Transverse colon (tissue), 4 donors: ENCODE measurements at regions of chr4 and their contacts with region 1.

Region 1: GRCh38 chr4:173516621-173517524 is 13.2 kb downstream of the HAND2 start:
- DNase-seq: no peak
- H3K4me3 ChIP-seq: peak overlapping the region in 2 of 4 donors; percentile 25 to 40
- H3K27ac ChIP-seq: peak overlapping the region; percentile 82 to 95 (median 89)
- H3K4me1 ChIP-seq: peaks cover 4 to 48% (median 27%) of the 10 kb centered on the region in 4 donors
- H3K27me3 ChIP-seq: peaks cover 100% of the 10 kb centered on the region
- CTCF ChIP-seq: no peak
- EP300 ChIP-seq: no peak
- POLR2A ChIP-seq: no peak

Region 2: DNA sequence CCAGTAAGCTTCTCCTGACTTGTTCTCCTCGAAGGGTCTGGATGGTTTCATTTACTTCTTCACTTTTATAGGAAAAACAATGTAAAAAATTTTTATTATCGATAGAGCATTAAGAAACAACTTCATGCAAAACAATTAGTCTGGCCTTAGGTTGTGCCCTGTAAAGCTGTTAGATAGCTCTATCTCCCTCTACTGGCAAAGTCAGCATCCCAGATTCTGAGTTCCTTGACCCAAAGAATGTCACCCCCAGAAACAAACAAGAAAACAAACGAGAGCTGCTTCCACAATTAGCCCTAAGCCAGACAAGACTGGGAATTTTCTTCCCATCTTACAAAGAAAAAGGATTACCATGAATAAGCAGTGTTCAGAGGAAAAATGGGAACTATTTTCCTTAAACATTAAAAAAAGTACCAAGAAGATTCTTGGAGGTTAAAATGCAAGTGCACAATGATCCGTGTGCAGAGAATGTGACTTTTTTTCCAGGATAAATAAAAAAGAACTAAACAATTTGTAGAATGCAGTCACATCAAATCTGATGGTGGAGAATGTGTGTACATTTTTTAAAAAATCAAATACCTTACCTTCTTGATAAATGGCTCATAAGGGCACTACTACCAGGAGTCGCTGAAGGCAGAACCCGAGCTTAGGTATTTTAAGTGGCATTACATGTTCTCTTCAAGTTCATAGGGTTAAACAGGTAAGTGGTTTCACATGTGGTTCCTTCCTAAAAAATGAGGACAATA is 473.4 kb after region 1 on chr4:
- in situ Hi-C with region 1: no loop called
- intact Hi-C with region 1: loop called (anchors 5 kb)
- DNase-seq: no peak
- H3K4me3 ChIP-seq: no peak overlapping the region
- H3K27ac ChIP-seq: peak overlapping the region in 2 of 4 donors; percentile 26 to 42
- H3K4me1 ChIP-seq: no peaks in the 10 kb centered on the region
- H3K27me3 ChIP-seq: no peaks in the 10 kb centered on the region
- CTCF ChIP-seq: peak; percentile 30 to 53 (median 45)
- EP300 ChIP-seq: no peak
- POLR2A ChIP-seq: no peak

Region 3: GRCh38 chr4:174156239-174156826 is 639.5 kb after region 1 on chr4:
- in situ Hi-C with region 1: loop called in 1 of 4 experiments (anchors 25 kb)
- intact Hi-C with region 1: loop called (anchors 5 kb)
- DNase-seq: no peak
- H3K4me3 ChIP-seq: no peak overlapping the region
- H3K27ac ChIP-seq: peak overlapping the region in 3 of 4 donors; percentile 39 to 72 (median 60)
- H3K4me1 ChIP-seq: no peaks in the 10 kb centered on the region
- H3K27me3 ChIP-seq: no peaks in the 10 kb centered on the region
- CTCF ChIP-seq: peak; percentile 46 to 61 (median 54)
- EP300 ChIP-seq: no peak
- POLR2A ChIP-seq: no peak